Breast epithelium (tissue), 4 donors: ENCODE measurements at regions of chr19 and their contacts with region 1.

Region 1: DNA sequence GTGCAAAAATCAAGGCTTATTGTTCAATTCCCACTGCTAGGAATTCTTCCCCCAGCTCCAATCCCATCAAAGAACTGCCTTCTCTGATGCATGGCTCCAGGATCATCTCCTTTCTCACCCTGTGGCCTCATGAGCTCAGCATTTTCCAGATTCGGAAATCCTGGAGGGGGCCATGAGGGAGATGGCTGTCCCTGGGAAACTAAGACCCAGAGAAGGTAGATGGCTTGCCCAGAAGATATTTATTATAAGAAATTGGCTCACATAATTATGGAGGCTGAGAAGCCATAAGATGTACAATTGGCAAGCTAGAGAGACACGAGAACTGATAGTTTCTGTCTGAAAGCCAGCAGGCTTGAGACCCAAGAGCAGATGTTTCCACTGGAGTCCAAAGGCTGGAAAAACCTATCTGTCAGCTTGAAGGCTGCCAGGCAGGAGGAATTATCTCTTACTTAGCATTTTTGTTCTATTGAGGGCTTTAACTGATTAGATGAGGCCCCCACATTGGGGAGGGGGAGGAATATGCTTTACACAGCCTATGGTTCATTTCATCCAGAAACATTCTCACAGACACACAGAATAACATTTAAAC is 58.6 kb downstream of the GADD45B start:
- DNase-seq: no peak
- H3K4me3 ChIP-seq: no peak overlapping the region
- H3K27ac ChIP-seq: no peak overlapping the region
- H3K4me1 ChIP-seq: no peaks in the 10 kb centered on the region
- H3K27me3 ChIP-seq: no peaks in the 10 kb centered on the region
- CTCF ChIP-seq: no peak
- POLR2A ChIP-seq: no peak

Region 2: GRCh38 chr19:1551068-1552040 is 983.2 kb before region 1 on chr19:
- intact Hi-C with region 1: no loop called
- DNase-seq: no peak
- H3K4me3 ChIP-seq: no peak overlapping the region
- H3K27ac ChIP-seq: no peak overlapping the region
- H3K4me1 ChIP-seq: no peaks in the 10 kb centered on the region
- H3K27me3 ChIP-seq: no peaks in the 10 kb centered on the region
- CTCF ChIP-seq: no peak
- POLR2A ChIP-seq: no peak

Region 3: GRCh38 chr19:2512523-2513431 is 21.7 kb before region 1 on chr19:
- intact Hi-C with region 1: loop called (anchors 1 kb)
- DNase-seq: no peak
- H3K4me3 ChIP-seq: no peak overlapping the region
- H3K27ac ChIP-seq: no peak overlapping the region
- H3K4me1 ChIP-seq: no peaks in the 10 kb centered on the region
- H3K27me3 ChIP-seq: no peaks in the 10 kb centered on the region
- CTCF ChIP-seq: no peak
- POLR2A ChIP-seq: no peak